MCF 10A (cell line): ENCODE measurements at regions of chr6 and their contacts with region 1.

Region 1: GRCh38 chr6:31795616-31796298 is at the start of gene VARS1:
- DNase-seq: peak; percentile 93
- H3K4me3 Mint-ChIP-seq: peak within 1 kb of the TSS; percentile 99
- H3K27ac Mint-ChIP-seq: peak within 1 kb of the TSS; percentile 98
- H3K4me1 Mint-ChIP-seq: peaks cover 27% of the 10 kb centered on the region
- H3K27me3 Mint-ChIP-seq: no peaks in the 10 kb centered on the region
- CTCF ChIP-seq: peak; percentile 69
- total RNA-seq, gene VARS1: 133 and 200 TPM in 2 replicates

Region 2: GRCh38 chr6:31639449-31639861 is 156.3 kb before region 1 on chr6:
- CTCF ChIA-PET with region 1: no interaction called
- POLR2A ChIA-PET with region 1: no interaction called
- intact Hi-C with region 1: no loop called
- DNase-seq: no peak
- H3K4me3 Mint-ChIP-seq: no peak overlapping the region
- H3K27ac Mint-ChIP-seq: no peak overlapping the region
- H3K4me1 Mint-ChIP-seq: no peaks in the 10 kb centered on the region
- H3K27me3 Mint-ChIP-seq: no peaks in the 10 kb centered on the region
- CTCF ChIP-seq: no peak

Region 3: GRCh38 chr6:31702819-31703522 is 92.8 kb before region 1 on chr6 and contains the start of gene ABHD16A:
- CTCF ChIA-PET with region 1: interaction called, 3 read pairs
- POLR2A ChIA-PET with region 1: interaction called, 14 read pairs
- intact Hi-C with region 1: no loop called
- DNase-seq: peak; percentile 98
- H3K4me3 Mint-ChIP-seq: peak within 1 kb of the TSS; percentile 95
- H3K27ac Mint-ChIP-seq: peak within 1 kb of the TSS; percentile 89
- H3K4me1 Mint-ChIP-seq: peaks cover 5% of the 10 kb centered on the region
- H3K27me3 Mint-ChIP-seq: no peaks in the 10 kb centered on the region
- CTCF ChIP-seq: no peak
- total RNA-seq, gene ABHD16A: 32.1 and 42.7 TPM in 2 replicates

Region 4: GRCh38 chr6:31776989-31777666 is 18.6 kb before region 1 on chr6 and contains the start of gene VWA7:
- CTCF ChIA-PET with region 1: interaction called, 8 read pairs
- POLR2A ChIA-PET with region 1: interaction called, 14 read pairs
- intact Hi-C with region 1: loop called (anchors 1 kb)
- DNase-seq: peak; percentile 95
- H3K4me3 Mint-ChIP-seq: peak within 1 kb of the TSS; percentile 26
- H3K27ac Mint-ChIP-seq: no peak within 1 kb of the TSS
- H3K4me1 Mint-ChIP-seq: peaks cover 26% of the 10 kb centered on the region
- H3K27me3 Mint-ChIP-seq: no peaks in the 10 kb centered on the region
- CTCF ChIP-seq: no peak
- total RNA-seq, gene VWA7: 2.0 and 3.1 TPM in 2 replicates

Region 5: GRCh38 chr6:31815025-31815838 is 19.5 kb after region 1 on chr6 and contains the starts of genes HSPA1A and HSPA1L:
- CTCF ChIA-PET with region 1: interaction called, 6 read pairs
- POLR2A ChIA-PET with region 1: interaction called, 79 read pairs
- intact Hi-C with region 1: loop called (anchors 2 kb)
- DNase-seq: peak; percentile 99
- H3K4me3 Mint-ChIP-seq: peak within 1 kb of the TSS; percentile 89
- H3K27ac Mint-ChIP-seq: peak within 1 kb of the TSS; percentile 97
- H3K4me1 Mint-ChIP-seq: peaks cover 11% of the 10 kb centered on the region
- H3K27me3 Mint-ChIP-seq: no peaks in the 10 kb centered on the region
- CTCF ChIP-seq: no peak
- total RNA-seq, gene HSPA1A: 20.3 and 34.0 TPM in 2 replicates
- total RNA-seq, gene HSPA1L: 0.35 and 0.79 TPM in 2 replicates

Region 6: GRCh38 chr6:31834434-31835198 is 38.9 kb after region 1 on chr6:
- CTCF ChIA-PET with region 1: interaction called, 4 read pairs
- POLR2A ChIA-PET with region 1: interaction called, 21 read pairs
- intact Hi-C with region 1: loop called (anchors 2 kb)
- DNase-seq: peak; percentile 87
- H3K4me3 Mint-ChIP-seq: peak overlapping the region; percentile 86
- H3K27ac Mint-ChIP-seq: peak overlapping the region; percentile 99
- H3K4me1 Mint-ChIP-seq: peaks cover 18% of the 10 kb centered on the region
- H3K27me3 Mint-ChIP-seq: no peaks in the 10 kb centered on the region
- CTCF ChIP-seq: no peak

Region 7: GRCh38 chr6:31847276-31847978 is 51.7 kb after region 1 on chr6:
- CTCF ChIA-PET with region 1: no interaction called
- POLR2A ChIA-PET with region 1: no interaction called
- intact Hi-C with region 1: no loop called
- DNase-seq: no peak
- H3K4me3 Mint-ChIP-seq: no peak overlapping the region
- H3K27ac Mint-ChIP-seq: no peak overlapping the region
- H3K4me1 Mint-ChIP-seq: no peaks in the 10 kb centered on the region
- H3K27me3 Mint-ChIP-seq: no peaks in the 10 kb centered on the region
- CTCF ChIP-seq: no peak

Region 8: GRCh38 chr6:32393665-32394420 is 598.1 kb after region 1 on chr6:
- CTCF ChIA-PET with region 1: no interaction called
- POLR2A ChIA-PET with region 1: no interaction called
- intact Hi-C with region 1: no loop called
- DNase-seq: no peak
- H3K4me3 Mint-ChIP-seq: no peak overlapping the region
- H3K27ac Mint-ChIP-seq: no peak overlapping the region
- H3K4me1 Mint-ChIP-seq: peaks cover 5% of the 10 kb centered on the region
- H3K27me3 Mint-ChIP-seq: peaks cover 89% of the 10 kb centered on the region
- CTCF ChIP-seq: no peak